IMR-90 (cell line): ENCODE measurements at regions of chr14 and their contacts with region 1.

Region 1: GRCh38 chr14:36553656-36554260 is 28.7 kb downstream of the NKX2-8 start:
- DNase-seq: peak; percentile 51
- ATAC-seq: peak; percentile 90
- H3K4me3 ChIP-seq: no peak overlapping the region
- H3K27ac ChIP-seq: no peak overlapping the region
- H3K4me1 ChIP-seq: no peaks in the 10 kb centered on the region
- H3K27me3 ChIP-seq: no peaks in the 10 kb centered on the region; the same call in 1 of the 2 replicates
- CTCF ChIP-seq: peak; percentile 81
- POLR2A ChIP-seq: no peak
- RAD21 ChIP-seq: peak; percentile 62

Region 2: DNA sequence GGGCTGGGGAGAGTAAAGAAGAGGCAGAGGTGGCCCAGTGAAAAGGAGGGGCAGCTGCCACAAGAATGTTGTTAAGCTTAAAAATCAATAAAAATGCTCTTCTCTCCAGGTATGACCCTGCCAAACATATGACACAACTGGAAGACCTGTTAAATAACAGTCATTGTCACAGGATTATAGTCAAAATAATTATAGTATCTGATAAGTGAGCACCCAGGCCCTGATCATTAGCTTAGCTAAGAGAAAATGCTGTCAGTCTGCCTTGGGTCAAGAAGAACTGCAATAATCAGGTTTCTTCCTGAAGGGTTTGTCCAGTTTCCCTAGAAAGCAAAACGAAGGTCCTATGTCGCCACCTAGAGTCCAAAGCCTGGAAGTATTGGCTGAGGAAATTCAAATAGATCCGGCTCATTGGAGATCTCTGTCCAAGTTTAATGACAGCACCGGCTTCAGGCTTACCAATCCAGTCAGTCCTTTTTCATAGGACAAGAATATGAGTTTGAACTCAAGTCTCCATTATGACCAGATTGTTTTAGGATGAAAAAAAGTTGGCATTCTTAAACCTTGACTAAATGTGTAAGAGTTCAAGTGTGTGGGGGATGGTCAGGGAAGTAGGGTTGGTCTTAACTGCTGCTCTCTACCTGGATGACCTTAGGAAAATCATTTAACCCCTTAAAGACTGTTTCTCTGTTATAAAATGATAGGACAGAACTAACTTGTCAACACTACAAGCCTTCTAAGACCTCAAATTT is 51.2 kb after region 1 on chr14:
- CTCF ChIA-PET with region 1: interaction called, 5 read pairs
- POLR2A ChIA-PET with region 1: no interaction called
- dilution Hi-C with region 1: no loop called
- in situ Hi-C with region 1: no loop called
- intact Hi-C with region 1: loop called (anchors 1 kb)
- DNase-seq: peak; percentile 66
- ATAC-seq: peak; percentile 64
- H3K4me3 ChIP-seq: no peak overlapping the region
- H3K27ac ChIP-seq: no peak overlapping the region
- H3K4me1 ChIP-seq: no peaks in the 10 kb centered on the region
- H3K27me3 ChIP-seq: peaks cover 2% of the 10 kb centered on the region
- CTCF ChIP-seq: peak; percentile 70
- POLR2A ChIP-seq: no peak
- RAD21 ChIP-seq: peak; percentile 65